Sigmoid colon (tissue), 7 donors: ENCODE measurements at regions of chr10 and their contacts with region 1.

Region 1: DNA sequence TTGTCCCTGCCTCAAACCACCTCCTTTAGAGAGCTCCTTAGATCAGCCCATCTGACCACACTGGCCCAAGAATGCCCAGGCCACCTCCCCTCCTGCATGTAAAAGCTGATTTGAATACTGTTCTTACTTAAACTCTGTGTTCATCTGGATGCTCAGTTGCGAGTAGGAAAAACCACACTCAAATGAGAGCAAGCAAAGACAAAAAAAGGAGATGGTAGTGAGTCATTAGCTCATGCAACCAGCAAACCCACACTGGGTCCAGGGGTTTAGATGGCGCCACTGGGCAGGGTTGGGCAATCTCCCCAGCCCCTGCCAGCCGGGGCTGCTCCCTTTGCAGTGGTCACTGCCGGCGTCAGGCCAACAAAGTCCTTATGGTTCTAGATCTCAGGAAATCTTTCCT is 32.7 kb downstream of the TSPAN15 start:
- DNase-seq: no peak
- H3K4me3 ChIP-seq: no peak overlapping the region
- H3K27ac ChIP-seq: peak overlapping the region; percentile 87 to 93 (median 92)
- H3K4me1 ChIP-seq: peaks cover 0 to 89% (median 85%) of the 10 kb centered on the region in 4 donors
- H3K27me3 ChIP-seq: no peaks in the 10 kb centered on the region
- CTCF ChIP-seq: no peak
- EP300 ChIP-seq: no peak
- POLR2A ChIP-seq: no peak

Region 2: DNA sequence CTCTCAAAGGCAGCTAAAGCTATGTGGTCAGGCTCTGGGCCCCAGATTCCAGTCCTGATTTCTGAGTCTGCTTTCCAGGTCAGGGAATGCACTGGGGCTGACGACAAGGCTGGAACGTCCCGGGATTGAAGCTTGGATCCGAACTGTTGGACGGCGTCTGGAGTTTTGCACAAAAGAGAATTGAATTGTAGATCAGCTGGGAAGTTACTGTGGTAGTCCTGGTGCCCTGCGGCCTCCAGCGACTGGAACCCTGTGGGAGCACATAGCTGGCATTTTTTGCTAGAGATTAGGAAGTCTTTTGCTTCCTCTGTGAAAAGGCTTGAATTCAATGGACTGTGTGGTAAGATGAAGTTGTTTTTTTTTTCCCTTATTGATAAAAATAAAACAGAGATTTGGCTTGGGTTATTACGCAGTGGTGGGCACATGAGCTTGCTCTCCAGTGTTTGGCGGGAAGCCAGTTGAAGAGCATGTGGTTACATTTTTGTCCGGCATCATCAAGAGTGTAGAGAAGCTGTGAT is 205.5 kb before region 1 on chr10 and contains the start of gene HK1:
- intact Hi-C with region 1: no loop called
- DNase-seq: no peak
- H3K4me3 ChIP-seq: no peak within 1 kb of the TSS
- H3K27ac ChIP-seq: no peak within 1 kb of the TSS
- H3K4me1 ChIP-seq: no peaks in the 10 kb centered on the region
- H3K27me3 ChIP-seq: no peaks in the 10 kb centered on the region
- CTCF ChIP-seq: no peak
- EP300 ChIP-seq: no peak
- POLR2A ChIP-seq: no peak
- total RNA-seq, gene HK1: 60.7 to 74.9 (median 69.1) TPM

Region 3: GRCh38 chr10:69290993-69291392 is 193.0 kb before region 1 on chr10:
- intact Hi-C with region 1: no loop called
- DNase-seq: no peak
- H3K4me3 ChIP-seq: no peak overlapping the region
- H3K27ac ChIP-seq: no peak overlapping the region
- H3K4me1 ChIP-seq: no peaks in the 10 kb centered on the region
- H3K27me3 ChIP-seq: peaks cover 0 to 3% (median 0%) of the 10 kb centered on the region in 3 donors
- CTCF ChIP-seq: no peak
- EP300 ChIP-seq: no peak
- POLR2A ChIP-seq: no peak

Region 4: GRCh38 chr10:69416695-69417094 is 67.3 kb before region 1 on chr10 and contains the start of gene TACR2:
- intact Hi-C with region 1: loop called (anchors 2 kb)
- DNase-seq: peak; percentile 97
- H3K4me3 ChIP-seq: peak within 1 kb of the TSS; percentile 53 to 62 (median 59)
- H3K27ac ChIP-seq: peak within 1 kb of the TSS; percentile 88 to 97 (median 94)
- H3K4me1 ChIP-seq: peaks cover 0 to 64% (median 56%) of the 10 kb centered on the region in 4 donors
- H3K27me3 ChIP-seq: no peaks in the 10 kb centered on the region
- CTCF ChIP-seq: no peak
- EP300 ChIP-seq: peak in 2 of 4 donors; percentile 56 to 72
- POLR2A ChIP-seq: peak; percentile 86 to 88
- total RNA-seq, gene TACR2: 161 to 184 (median 170) TPM